Activated naive CD4-positive, alpha-beta T cell treated with anti-CD3 and anti-CD28 coated beads for 36 hours (primary cell): ENCODE measurements at regions of chr2 and their contacts with region 1.

Region 1: DNA sequence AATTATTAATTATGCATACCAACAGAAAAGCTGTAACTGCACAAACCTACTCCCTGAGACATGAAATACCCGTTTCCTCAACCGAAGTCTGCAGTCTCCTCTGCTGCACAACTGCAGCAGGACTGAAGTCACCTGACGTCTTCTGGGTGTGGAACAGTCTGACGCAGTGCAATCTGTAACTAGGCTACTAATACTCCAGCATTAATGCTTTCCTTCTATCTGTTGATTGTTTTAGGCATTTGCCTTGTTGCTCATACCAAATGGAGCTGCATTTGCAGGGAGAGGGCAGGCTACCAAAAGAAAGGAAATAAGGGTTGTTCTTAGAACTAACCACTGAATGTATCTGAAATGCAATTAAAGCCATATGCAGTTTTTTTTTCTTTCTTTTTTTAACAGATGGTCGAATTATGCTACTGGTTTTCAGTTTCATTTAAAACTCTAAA is 40.1 kb downstream of the RTN4 start:
- DNase-seq: peak; percentile 54
- H3K4me3 Mint-ChIP-seq: peak overlapping the region; percentile 77
- H3K27ac Mint-ChIP-seq: peak overlapping the region; percentile 55
- H3K4me1 Mint-ChIP-seq: peaks cover 56% of the 10 kb centered on the region
- H3K27me3 Mint-ChIP-seq: no peaks in the 10 kb centered on the region

Region 2: DNA sequence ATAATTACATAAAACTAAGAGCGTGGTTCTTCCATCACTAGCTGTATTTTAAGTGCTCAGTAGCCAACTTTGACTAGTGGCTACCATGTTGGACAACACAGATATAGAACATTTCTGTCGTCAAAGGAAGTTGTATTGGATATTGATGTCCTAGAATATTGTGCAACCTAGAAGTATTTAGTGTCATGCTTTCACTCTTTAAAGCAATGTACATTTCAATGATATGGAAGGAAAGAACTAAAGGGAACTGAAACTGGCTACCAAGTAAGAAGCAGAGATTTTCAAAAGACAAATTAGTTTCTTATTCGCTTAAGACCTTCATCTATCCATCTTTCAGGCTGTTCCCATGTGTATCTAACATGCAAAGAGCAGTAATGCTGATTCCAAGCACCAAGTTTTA is 372.1 kb before region 1 on chr2:
- CTCF ChIA-PET with region 1: no interaction called
- intact Hi-C with region 1: no loop called
- DNase-seq: no peak
- H3K4me3 Mint-ChIP-seq: no peak overlapping the region
- H3K27ac Mint-ChIP-seq: no peak overlapping the region
- H3K4me1 Mint-ChIP-seq: peaks cover 40% of the 10 kb centered on the region
- H3K27me3 Mint-ChIP-seq: no peaks in the 10 kb centered on the region

Region 3: GRCh38 chr2:54665436-54665856 is 344.7 kb before region 1 on chr2:
- CTCF ChIA-PET with region 1: interaction called, 5 read pairs
- intact Hi-C with region 1: loop called (anchors 5 kb)
- DNase-seq: peak; percentile 73
- H3K4me3 Mint-ChIP-seq: no peak overlapping the region
- H3K27ac Mint-ChIP-seq: no peak overlapping the region
- H3K4me1 Mint-ChIP-seq: no peaks in the 10 kb centered on the region
- H3K27me3 Mint-ChIP-seq: no peaks in the 10 kb centered on the region

Region 4: DNA sequence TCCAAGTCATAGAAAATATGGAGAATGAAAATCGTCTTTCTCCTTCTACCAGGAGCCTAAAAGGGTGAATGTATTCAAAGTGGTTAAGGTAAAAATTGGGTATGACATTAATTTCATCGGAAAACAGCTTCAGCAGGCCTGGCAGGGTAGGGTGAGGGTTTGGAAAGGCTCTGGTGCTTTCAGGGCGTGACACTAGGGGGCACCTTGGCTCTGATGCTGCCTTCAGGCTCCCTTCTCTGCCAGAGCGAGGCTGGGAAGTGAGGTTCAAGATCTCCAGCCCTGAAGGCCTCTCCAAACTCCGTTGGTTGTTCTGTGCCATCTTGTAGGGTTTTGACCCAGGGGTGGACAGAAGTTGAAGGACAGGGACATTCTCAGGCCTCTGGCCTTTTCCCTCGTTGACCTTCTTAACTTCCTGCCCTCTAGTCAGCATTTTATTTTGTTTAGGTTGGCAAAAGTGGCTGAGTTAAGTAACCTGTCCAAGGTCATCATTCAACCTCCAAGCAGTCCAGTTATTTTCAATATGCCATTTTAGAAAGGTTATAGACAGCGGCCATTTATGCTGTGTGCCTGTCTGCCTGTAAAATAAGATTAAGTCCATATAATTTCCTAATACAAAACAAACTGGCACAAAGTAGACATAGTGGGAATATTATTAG is 246.4 kb before region 1 on chr2:
- CTCF ChIA-PET with region 1: no interaction called
- intact Hi-C with region 1: loop called (anchors 5 kb)
- DNase-seq: peak; percentile 53
- H3K4me3 Mint-ChIP-seq: no peak overlapping the region
- H3K27ac Mint-ChIP-seq: no peak overlapping the region
- H3K4me1 Mint-ChIP-seq: peaks cover 12% of the 10 kb centered on the region
- H3K27me3 Mint-ChIP-seq: no peaks in the 10 kb centered on the region

Region 5: DNA sequence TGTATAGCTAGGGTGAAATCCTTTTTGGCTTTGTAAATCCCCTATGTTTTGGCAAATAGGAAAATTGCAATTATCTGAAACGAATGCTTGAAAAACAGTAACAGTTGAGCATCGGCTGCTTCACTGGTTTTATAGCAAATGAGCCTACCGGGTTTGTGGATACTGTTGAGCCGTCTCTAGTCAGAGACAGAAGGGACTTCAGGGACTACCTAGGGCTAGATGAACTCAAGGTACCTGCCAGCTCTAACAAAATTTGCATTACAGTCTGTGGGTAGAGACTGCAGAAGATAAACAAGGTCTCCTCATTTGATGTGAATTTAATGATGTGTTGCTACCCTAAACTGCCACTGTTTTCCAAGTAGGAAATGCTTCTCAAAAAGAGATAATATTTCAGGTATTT is 185.6 kb before region 1 on chr2:
- CTCF ChIA-PET with region 1: no interaction called
- intact Hi-C with region 1: no loop called
- DNase-seq: no peak
- H3K4me3 Mint-ChIP-seq: no peak overlapping the region
- H3K27ac Mint-ChIP-seq: no peak overlapping the region
- H3K4me1 Mint-ChIP-seq: no peaks in the 10 kb centered on the region
- H3K27me3 Mint-ChIP-seq: peaks cover 4% of the 10 kb centered on the region

Region 6: GRCh38 chr2:54957321-54957999 is 52.7 kb before region 1 on chr2:
- CTCF ChIA-PET with region 1: no interaction called
- intact Hi-C with region 1: no loop called
- DNase-seq: no peak
- H3K4me3 Mint-ChIP-seq: no peak overlapping the region
- H3K27ac Mint-ChIP-seq: no peak overlapping the region
- H3K4me1 Mint-ChIP-seq: peaks cover 4% of the 10 kb centered on the region
- H3K27me3 Mint-ChIP-seq: no peaks in the 10 kb centered on the region

Region 7: DNA sequence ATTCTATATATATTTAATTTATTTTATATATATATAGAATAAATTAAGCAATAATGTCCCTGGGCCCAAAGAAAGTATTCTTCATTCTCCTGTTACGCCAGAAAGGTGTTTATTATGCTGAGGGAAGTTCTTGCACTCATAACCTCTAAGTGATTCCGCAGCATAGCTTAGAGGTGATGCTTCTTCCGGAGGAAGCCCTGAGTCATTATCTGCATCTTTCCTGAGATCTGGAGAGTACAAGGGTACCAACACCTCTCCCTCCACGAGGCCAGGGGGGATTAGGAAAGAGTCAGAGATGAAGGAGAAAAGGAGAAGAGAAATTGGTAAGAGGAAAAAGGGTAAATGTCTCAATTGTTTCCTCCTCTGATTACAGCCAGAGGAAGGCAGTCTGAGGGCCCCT is 83.2 kb after region 1 on chr2:
- CTCF ChIA-PET with region 1: no interaction called
- intact Hi-C with region 1: no loop called
- DNase-seq: no peak
- H3K4me3 Mint-ChIP-seq: no peak overlapping the region
- H3K27ac Mint-ChIP-seq: no peak overlapping the region
- H3K4me1 Mint-ChIP-seq: peaks cover 3% of the 10 kb centered on the region
- H3K27me3 Mint-ChIP-seq: no peaks in the 10 kb centered on the region